Activated CD8-positive, alpha-beta T cell treated with anti-CD3 and anti-CD28 coated beads, Interleukin-2, amount 10 ng/mL, durations not matched to agents 7 days and 5 days (primary cell): ENCODE measurements at regions of chr9 and their contacts with region 1.

Region 1: GRCh38 chr9:131334629-131335367 is 45.3 kb downstream of the PLPP7 start:
- DNase-seq: no peak
- ATAC-seq: no peak
- H3K4me3 Mint-ChIP-seq: no peak overlapping the region
- H3K27ac Mint-ChIP-seq: no peak overlapping the region
- H3K4me1 Mint-ChIP-seq: peaks cover 7% of the 10 kb centered on the region
- H3K27me3 Mint-ChIP-seq: peaks cover 3% of the 10 kb centered on the region

Region 2: GRCh38 chr9:131098391-131099101 is 236.3 kb before region 1 on chr9:
- CTCF ChIA-PET with region 1: no interaction called
- POLR2A ChIA-PET with region 1: no interaction called
- DNase-seq: no peak
- ATAC-seq: no peak
- H3K4me3 Mint-ChIP-seq: no peak overlapping the region
- H3K27ac Mint-ChIP-seq: no peak overlapping the region
- H3K4me1 Mint-ChIP-seq: peaks cover 8% of the 10 kb centered on the region
- H3K27me3 Mint-ChIP-seq: peaks cover 36% of the 10 kb centered on the region

Region 3: GRCh38 chr9:131149688-131150053 is 185.1 kb before region 1 on chr9:
- CTCF ChIA-PET with region 1: interaction called, 10 read pairs
- POLR2A ChIA-PET with region 1: no interaction called
- DNase-seq: no peak
- ATAC-seq: no peak
- H3K4me3 Mint-ChIP-seq: no peak overlapping the region
- H3K27ac Mint-ChIP-seq: peak overlapping the region; percentile 23
- H3K4me1 Mint-ChIP-seq: peaks cover 9% of the 10 kb centered on the region
- H3K27me3 Mint-ChIP-seq: no peaks in the 10 kb centered on the region

Region 4: GRCh38 chr9:131203431-131204218 is 131.2 kb before region 1 on chr9:
- CTCF ChIA-PET with region 1: interaction called, 11 read pairs
- POLR2A ChIA-PET with region 1: no interaction called
- DNase-seq: no peak
- ATAC-seq: peak; percentile 44
- H3K4me3 Mint-ChIP-seq: no peak overlapping the region
- H3K27ac Mint-ChIP-seq: no peak overlapping the region
- H3K4me1 Mint-ChIP-seq: no peaks in the 10 kb centered on the region
- H3K27me3 Mint-ChIP-seq: no peaks in the 10 kb centered on the region

Region 5: GRCh38 chr9:131253891-131254491 is 80.8 kb before region 1 on chr9:
- CTCF ChIA-PET with region 1: interaction called, 20 read pairs
- POLR2A ChIA-PET with region 1: no interaction called
- DNase-seq: no peak
- ATAC-seq: no peak
- H3K4me3 Mint-ChIP-seq: peak overlapping the region; percentile 34
- H3K27ac Mint-ChIP-seq: peak overlapping the region; percentile 97
- H3K4me1 Mint-ChIP-seq: peaks cover 80% of the 10 kb centered on the region
- H3K27me3 Mint-ChIP-seq: no peaks in the 10 kb centered on the region